MCF 10A (cell line): ENCODE measurements at regions of chr1 and their contacts with region 1.

Region 1: DNA sequence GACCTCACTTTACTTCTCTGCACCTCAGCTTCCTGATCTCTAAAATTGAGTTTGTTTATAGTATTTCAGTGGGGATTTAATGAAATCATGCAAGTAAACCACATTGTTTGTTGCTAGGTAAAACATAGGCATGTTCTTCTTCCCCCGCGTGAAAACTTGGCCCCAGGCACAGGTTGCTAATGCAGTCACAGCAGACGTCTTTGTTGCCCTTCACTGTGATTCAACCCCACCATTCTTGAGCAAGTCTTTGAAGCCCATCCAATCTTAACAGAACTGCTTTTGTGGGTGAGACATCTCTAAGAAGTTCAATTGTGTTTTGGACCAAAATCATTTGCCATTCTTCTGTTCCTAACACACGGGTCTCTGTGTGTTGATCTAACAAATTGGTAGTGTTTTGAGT is 185.5 kb downstream of the ZNF281 start:
- DNase-seq: peak; percentile 96
- H3K4me3 Mint-ChIP-seq: no peak overlapping the region
- H3K27ac Mint-ChIP-seq: peak overlapping the region; percentile 69
- H3K4me1 Mint-ChIP-seq: peaks cover 37% of the 10 kb centered on the region
- H3K27me3 Mint-ChIP-seq: no peaks in the 10 kb centered on the region
- CTCF ChIP-seq: no peak

Region 2: GRCh38 chr1:200211157-200211556 is 13.2 kb before region 1 on chr1:
- CTCF ChIA-PET with region 1: interaction called, 5 read pairs
- POLR2A ChIA-PET with region 1: interaction called, 16 read pairs
- intact Hi-C with region 1: no loop called
- DNase-seq: peak; percentile 57
- H3K4me3 Mint-ChIP-seq: no peak overlapping the region
- H3K27ac Mint-ChIP-seq: no peak overlapping the region
- H3K4me1 Mint-ChIP-seq: peaks cover 15% of the 10 kb centered on the region
- H3K27me3 Mint-ChIP-seq: no peaks in the 10 kb centered on the region
- CTCF ChIP-seq: no peak